ENCODE measurements at regions of chr19 and their contacts with region 1.

Region 1: DNA sequence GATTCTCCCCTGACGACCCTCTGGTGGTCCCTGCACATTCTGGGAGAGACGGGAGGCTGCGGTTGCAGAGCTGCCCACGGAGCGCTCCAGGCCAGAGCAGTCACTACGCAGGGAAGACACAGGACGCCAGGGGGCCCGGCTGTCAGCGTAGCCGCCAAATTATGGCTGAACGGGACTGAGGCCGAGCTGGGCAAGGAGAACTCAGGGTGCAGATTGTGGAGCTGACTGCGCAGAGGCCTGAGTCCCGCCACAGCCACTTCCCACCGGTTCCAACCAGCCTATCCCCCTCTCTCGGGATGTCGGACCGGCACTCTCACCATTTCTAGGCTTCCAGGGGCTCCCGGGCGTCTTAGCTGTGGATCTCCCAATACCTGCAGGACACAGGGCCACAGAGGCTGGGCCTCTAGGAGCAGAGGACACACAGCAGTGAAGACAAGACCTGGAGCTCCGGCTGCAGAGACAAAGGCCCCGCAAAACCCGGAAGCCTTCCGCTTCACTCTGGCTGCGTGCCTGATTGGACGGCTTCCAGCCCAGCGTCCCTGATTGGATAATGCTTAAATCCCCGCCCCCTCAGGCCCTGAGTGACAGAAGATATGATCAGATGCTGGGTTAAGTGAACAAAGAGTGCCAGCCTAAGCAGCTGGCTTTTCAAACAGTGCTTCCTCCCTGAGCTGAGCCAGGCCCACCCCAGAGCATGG is at the start of gene ZNF737:
- DNase-seq: peak; percentile 91 to 95 (median 93)
- H3K4me3 ChIP-seq: peak within 1 kb of the TSS; percentile 57 to 95
- H3K4me3 Mint-ChIP-seq: peak within 1 kb of the TSS; percentile 99 to 100 (median 99)
- H3K27ac ChIP-seq: peak within 1 kb of the TSS; percentile 73
- H3K27ac Mint-ChIP-seq: peak within 1 kb of the TSS; percentile 97 to 99 (median 98)
- H3K4me1 ChIP-seq: no peaks in the 10 kb centered on the region
- H3K4me1 Mint-ChIP-seq: peaks cover 12 to 43% (median 29%) of the 10 kb centered on the region in 4 donors
- H3K27me3 ChIP-seq: no peaks in the 10 kb centered on the region
- H3K27me3 Mint-ChIP-seq: no peaks in the 10 kb centered on the region
- total RNA-seq, gene ZNF737: 41.3 to 44.7 TPM

Region 2: DNA sequence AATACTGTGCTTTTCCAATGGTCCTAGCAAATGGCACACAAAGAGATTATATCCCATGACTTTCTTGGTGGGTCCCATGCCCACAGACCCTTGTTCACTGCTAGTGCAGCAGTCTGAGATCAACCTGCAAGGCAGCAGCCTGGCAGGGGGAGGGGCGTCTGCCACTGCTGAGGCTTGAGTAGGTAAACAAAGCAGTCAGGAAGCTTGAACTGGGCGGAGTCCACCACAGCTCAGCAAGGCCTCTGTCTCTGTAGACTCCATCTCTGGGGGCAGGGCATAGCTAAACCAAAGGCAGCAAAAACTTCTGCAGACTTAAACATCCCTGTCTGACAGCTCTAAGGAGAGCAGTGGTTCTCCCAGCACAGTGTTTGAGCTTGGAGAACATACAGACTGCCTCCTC is 82.7 kb before region 1 on chr19:
- CTCF ChIA-PET with region 1: interaction called, 6 read pairs
- POLR2A ChIA-PET with region 1: interaction called, 11 read pairs
- intact Hi-C with region 1: no loop called
- DNase-seq: peak in 4 of 5 donors; percentile 11 to 55 (median 41)
- H3K4me3 ChIP-seq: no peak overlapping the region
- H3K4me3 Mint-ChIP-seq: peak overlapping the region in 7 of 8 donors; percentile 12 to 83 (median 59)
- H3K27ac ChIP-seq: no peak overlapping the region
- H3K27ac Mint-ChIP-seq: peak overlapping the region in 3 of 7 donors; percentile 22 to 52 (median 36)
- H3K4me1 ChIP-seq: peaks cover 14% of the 10 kb centered on the region
- H3K4me1 Mint-ChIP-seq: peaks cover 4 to 36% (median 20%) of the 10 kb centered on the region in 4 donors
- H3K27me3 ChIP-seq: no peaks in the 10 kb centered on the region
- H3K27me3 Mint-ChIP-seq: no peaks in the 10 kb centered on the region

Region 3: DNA sequence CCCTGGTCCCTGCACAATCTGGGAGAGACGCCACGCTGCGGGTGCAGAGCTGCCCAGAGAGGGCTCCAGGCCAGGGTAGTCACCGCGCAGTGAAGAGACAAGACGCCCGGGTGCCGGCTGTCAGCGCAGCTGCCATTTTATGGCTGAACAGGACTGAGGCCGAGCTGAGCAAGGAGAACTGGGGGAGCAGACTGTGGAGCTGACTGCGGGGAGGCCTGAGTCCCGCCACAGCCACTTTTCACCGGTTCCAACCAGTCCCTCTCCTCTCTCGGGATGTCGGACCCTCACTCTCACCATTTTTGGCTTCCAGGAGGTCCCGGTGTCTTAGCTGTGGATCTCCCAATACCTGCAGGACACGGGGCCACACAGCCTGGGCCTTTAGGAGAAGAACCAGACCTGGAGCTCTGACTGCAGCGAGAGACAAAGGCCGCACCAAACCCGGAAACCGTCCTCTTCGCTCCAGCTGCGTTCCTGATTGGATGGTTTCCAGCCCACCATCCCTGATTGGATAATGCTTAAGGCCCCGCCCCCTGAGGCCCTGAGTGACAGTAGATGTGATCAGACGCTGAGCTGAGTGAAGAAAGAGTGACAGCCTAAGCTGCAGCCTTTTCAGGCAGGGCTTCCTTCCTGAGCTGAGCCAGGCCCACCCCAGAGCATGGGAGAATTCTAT is 95.8 kb after region 1 on chr19 and contains the start of gene ZNF626:
- CTCF ChIA-PET with region 1: interaction called, 7 read pairs
- POLR2A ChIA-PET with region 1: interaction called, 47 read pairs
- intact Hi-C with region 1: loop called (anchors 1 kb)
- DNase-seq: peak; percentile 88 to 95 (median 92)
- H3K4me3 ChIP-seq: peak within 1 kb of the TSS; percentile 36 to 60
- H3K4me3 Mint-ChIP-seq: peak within 1 kb of the TSS; percentile 90 to 98 (median 97)
- H3K27ac ChIP-seq: peak within 1 kb of the TSS; percentile 81
- H3K27ac Mint-ChIP-seq: peak within 1 kb of the TSS; percentile 91 to 98 (median 97)
- H3K4me1 ChIP-seq: peaks cover 12% of the 10 kb centered on the region
- H3K4me1 Mint-ChIP-seq: peaks cover 20 to 73% (median 46%) of the 10 kb centered on the region in 4 donors
- H3K27me3 ChIP-seq: no peaks in the 10 kb centered on the region
- H3K27me3 Mint-ChIP-seq: no peaks in the 10 kb centered on the region
- total RNA-seq, gene ZNF626: 18.6 to 19.8 TPM

Region 4: DNA sequence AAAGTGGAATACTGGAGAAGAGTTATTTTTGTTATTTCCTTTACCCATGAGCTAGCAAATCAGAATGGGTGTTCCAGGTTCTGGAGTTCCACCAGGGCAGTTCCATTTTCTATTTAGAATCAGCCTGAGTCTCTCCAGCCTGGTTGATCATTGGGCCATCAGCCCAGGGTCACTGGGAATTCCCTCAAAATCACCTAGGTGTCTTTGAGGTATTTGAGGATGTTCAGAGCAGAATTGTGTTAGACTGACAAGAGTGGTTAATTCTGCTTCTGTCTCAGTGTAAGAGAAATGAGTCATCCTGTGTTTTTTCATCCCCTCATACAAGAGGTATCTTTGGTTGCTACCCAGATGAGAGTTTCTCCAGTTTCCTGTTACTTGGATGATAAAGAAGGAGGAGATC is 222.3 kb after region 1 on chr19:
- CTCF ChIA-PET with region 1: no interaction called
- POLR2A ChIA-PET with region 1: no interaction called
- intact Hi-C with region 1: no loop called
- DNase-seq: no peak
- H3K4me3 ChIP-seq: no peak overlapping the region
- H3K4me3 Mint-ChIP-seq: no peak overlapping the region
- H3K27ac ChIP-seq: no peak overlapping the region
- H3K27ac Mint-ChIP-seq: no peak overlapping the region
- H3K4me1 ChIP-seq: no peaks in the 10 kb centered on the region
- H3K4me1 Mint-ChIP-seq: peaks cover 5 to 10% (median 6%) of the 10 kb centered on the region in 4 donors
- H3K27me3 ChIP-seq: no peaks in the 10 kb centered on the region
- H3K27me3 Mint-ChIP-seq: no peaks in the 10 kb centered on the region

Measured in CD4-positive, alpha-beta memory T cell (primary cell).